ENCODE measurements at regions of chr4 and their contacts with region 1.

Region 1: DNA sequence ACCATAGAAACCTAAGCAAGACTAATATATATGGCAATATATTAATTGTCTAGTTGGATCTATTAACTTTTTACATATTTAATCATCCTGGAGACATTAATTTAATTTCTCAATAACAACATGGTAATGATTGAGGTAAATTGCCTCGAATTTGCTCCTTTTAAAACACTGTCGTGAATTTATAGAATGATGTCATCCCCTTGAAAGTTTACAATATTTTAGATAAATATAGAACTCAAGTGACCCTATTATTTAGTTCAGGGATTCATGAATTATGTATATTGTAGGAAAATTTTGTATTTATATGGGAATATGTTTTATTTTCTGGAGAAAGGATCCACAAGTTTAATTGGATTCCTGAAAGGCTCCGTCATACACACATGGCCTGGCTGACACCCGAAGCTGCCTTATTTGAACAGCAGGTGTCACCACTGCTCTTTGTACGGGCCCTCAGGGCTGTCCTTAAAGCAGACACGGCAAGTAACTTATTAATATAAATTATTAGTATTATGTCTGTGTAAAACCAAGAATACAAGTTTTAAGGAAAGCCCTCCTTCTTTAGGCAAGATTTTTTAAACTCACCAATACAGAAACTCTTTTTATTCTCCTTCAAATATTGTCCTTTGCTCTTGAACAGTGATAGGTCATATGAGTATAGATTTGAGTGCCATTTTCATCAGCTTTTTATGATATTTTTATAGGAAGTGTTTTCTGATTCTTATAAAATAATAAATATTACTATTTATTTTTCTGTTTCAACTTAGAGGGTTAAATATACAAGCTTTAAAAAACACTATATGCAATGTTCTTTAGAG is 1.9 kb upstream of the PLRG1 start:
- DNase-seq: peak; percentile 47 to 82 (median 62)
- H3K4me3 ChIP-seq: no peak overlapping the region
- H3K4me3 Mint-ChIP-seq: peak overlapping the region in 1 of 7 donors; percentile 43
- H3K27ac ChIP-seq: no peak overlapping the region
- H3K27ac Mint-ChIP-seq: peak overlapping the region in 4 of 8 donors; percentile 49 to 77 (median 68)
- H3K4me1 ChIP-seq: peaks cover 25% of the 10 kb centered on the region
- H3K4me1 Mint-ChIP-seq: peaks cover 24 to 41% (median 33%) of the 10 kb centered on the region in 3 donors
- H3K27me3 ChIP-seq: no peaks in the 10 kb centered on the region
- H3K27me3 Mint-ChIP-seq: peaks cover 0 to 1% of the 10 kb centered on the region in 2 donors

Region 2: DNA sequence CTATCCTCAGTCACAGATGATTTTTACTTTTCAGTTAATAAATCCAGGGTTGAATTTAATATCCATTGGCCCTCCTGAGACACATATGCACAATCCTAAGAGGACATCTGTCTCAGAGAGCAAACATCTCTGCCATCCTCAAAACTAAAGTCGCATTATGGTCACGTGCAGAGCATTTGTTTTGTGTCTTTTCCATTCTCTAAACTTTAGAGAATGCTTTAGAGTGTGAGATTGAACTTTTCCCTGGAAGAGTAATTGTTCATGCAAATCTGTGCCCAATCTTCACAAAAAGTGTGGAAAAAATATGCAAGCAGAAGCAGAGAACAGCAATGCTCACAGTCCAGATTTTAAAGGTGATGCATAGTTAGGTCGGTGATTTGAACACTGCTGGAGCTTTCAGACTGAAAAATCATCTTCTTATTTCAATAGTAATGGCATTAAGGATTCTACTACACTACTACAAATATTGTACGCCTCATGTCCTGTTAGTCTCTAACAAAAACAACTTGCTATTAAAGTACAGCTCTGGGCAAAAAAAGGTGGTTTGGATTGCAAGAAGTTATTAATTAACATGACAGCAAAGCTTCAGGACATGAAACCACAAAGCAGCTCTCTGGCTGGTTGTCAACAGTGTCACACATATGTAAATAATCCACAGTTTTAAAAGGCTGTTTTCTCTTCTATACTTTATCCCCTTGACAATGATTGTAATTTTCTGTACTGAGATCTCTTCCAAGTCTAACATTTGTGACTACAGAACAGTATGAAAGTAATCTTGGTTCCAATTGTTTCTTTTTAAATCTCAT is 80.3 kb before region 1 on chr4:
- CTCF ChIA-PET with region 1: no interaction called
- POLR2A ChIA-PET with region 1: no interaction called
- DNase-seq: no peak
- H3K4me3 ChIP-seq: no peak overlapping the region
- H3K4me3 Mint-ChIP-seq: no peak overlapping the region
- H3K27ac ChIP-seq: no peak overlapping the region
- H3K27ac Mint-ChIP-seq: no peak overlapping the region
- H3K4me1 ChIP-seq: no peaks in the 10 kb centered on the region
- H3K4me1 Mint-ChIP-seq: no peaks in the 10 kb centered on the region
- H3K27me3 ChIP-seq: no peaks in the 10 kb centered on the region
- H3K27me3 Mint-ChIP-seq: peaks cover 4 to 33% of the 10 kb centered on the region in 2 donors

Region 3: DNA sequence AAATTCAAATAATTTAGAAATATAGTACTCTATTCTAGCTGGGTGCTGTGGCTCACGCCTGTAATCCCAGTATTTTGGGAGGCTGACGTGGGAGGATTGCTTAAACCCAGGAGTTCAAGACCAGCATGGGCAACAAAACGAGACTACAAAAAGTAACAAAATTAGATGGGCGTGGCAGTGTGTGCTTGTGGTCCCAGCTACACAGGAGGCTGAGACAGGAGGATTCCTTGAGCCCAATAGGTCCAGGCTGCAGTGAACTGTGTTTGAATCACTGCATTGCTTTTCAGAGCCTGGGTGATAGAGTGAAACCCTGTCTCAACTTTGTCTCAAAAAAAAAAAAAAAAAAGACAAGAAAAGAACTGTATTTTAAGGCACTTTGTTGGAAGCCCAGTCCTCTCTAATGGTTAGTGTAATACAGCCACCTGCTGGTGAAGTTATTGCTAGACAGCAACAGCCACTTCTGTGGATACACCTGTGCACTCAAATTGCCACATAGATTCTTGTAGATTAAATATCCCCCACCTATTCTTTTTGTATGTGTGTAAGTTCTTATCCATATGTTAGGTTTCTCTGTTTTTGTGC is 70.4 kb after region 1 on chr4:
- CTCF ChIA-PET with region 1: interaction called, 11 read pairs
- POLR2A ChIA-PET with region 1: no interaction called
- DNase-seq: peak in 2 of 5 donors; percentile 5 to 33
- H3K4me3 ChIP-seq: no peak overlapping the region
- H3K4me3 Mint-ChIP-seq: no peak overlapping the region
- H3K27ac ChIP-seq: no peak overlapping the region
- H3K27ac Mint-ChIP-seq: peak overlapping the region in 1 of 8 donors; percentile 56
- H3K4me1 ChIP-seq: no peaks in the 10 kb centered on the region
- H3K4me1 Mint-ChIP-seq: peaks cover 0 to 4% (median 3%) of the 10 kb centered on the region in 3 donors
- H3K27me3 ChIP-seq: no peaks in the 10 kb centered on the region
- H3K27me3 Mint-ChIP-seq: peaks cover 3 to 15% of the 10 kb centered on the region in 2 donors